IMR-90 (cell line): ENCODE measurements at regions of chr12 and their contacts with region 1.

Region 1: DNA sequence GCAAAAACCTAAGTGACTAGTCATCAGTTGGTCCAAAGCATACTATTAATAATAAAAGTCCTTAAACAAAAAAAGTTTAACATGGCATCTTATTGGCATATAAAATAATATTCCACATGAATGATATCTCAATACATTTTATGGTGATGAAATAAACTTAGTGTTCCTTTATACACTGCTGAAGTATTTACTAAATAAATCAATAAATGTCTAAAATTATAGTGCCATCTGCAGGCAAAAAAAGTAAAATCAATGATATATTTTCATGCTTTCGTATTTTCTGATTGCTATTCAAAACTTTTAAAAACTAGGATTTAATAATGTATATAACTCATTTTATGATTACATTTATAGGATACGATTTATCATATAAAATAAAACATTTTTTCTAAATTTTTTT is 30.5 kb downstream of the PUS7L start:
- DNase-seq: no peak
- ATAC-seq: no peak
- H3K4me3 ChIP-seq: no peak overlapping the region
- H3K27ac ChIP-seq: no peak overlapping the region
- H3K4me1 ChIP-seq: no peaks in the 10 kb centered on the region
- H3K27me3 ChIP-seq: no peaks in the 10 kb centered on the region
- CTCF ChIP-seq: peak; percentile 37; the same call in 1 of the 2 replicates
- POLR2A ChIP-seq: no peak
- RAD21 ChIP-seq: no peak

Region 2: DNA sequence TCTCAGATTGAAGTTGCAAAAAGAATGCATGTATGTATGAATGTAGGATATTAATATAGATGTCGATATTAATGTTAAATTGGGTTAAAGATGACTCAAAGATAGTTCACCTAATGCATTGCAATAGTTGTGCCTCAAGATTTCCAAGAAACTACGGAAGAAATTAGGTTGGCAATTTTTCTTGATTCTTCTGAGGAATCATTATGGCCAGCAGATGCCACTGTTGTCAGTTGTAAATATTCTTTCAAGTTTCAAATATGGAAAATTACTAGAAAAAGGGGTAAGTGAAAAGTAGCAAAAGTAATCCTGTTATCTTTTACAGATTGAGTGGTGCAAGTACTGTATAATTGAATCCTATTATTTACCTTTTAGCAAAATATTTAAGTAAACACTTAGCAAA is 378.3 kb before region 1 on chr12:
- CTCF ChIA-PET with region 1: no interaction called
- POLR2A ChIA-PET with region 1: no interaction called
- dilution Hi-C with region 1: no loop called
- in situ Hi-C with region 1: no loop called
- intact Hi-C with region 1: loop called (anchors 2 kb)
- DNase-seq: peak; percentile 31
- ATAC-seq: peak; percentile 27; the same call in 1 of the 2 replicates
- H3K4me3 ChIP-seq: no peak overlapping the region
- H3K27ac ChIP-seq: no peak overlapping the region
- H3K4me1 ChIP-seq: no peaks in the 10 kb centered on the region
- H3K27me3 ChIP-seq: no peaks in the 10 kb centered on the region
- CTCF ChIP-seq: peak; percentile 49
- POLR2A ChIP-seq: no peak
- RAD21 ChIP-seq: peak; percentile 39; the same call in 1 of the 2 replicates

Region 3: DNA sequence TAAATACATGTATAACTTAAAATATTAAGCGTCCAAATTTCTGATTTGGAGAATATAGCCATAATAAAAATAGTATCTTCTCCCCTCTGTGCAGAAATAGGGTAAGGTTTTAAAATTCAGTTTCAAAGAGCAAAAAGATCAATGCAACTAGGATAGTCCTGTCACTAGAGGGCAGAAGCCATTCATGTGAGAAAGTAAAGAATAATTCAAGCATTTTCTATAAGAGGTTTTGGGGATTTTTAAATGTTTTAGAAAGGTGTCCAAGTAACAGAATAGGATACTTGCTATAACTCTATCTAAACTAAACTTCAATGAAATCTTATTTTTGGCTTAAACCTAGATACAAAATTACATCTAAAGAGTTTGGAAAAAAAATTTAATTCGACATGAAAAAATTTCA is 226.4 kb before region 1 on chr12:
- CTCF ChIA-PET with region 1: interaction called, 3 read pairs
- POLR2A ChIA-PET with region 1: no interaction called
- dilution Hi-C with region 1: no loop called
- in situ Hi-C with region 1: no loop called
- intact Hi-C with region 1: loop called (anchors 1 kb)
- DNase-seq: peak; percentile 34
- ATAC-seq: peak; percentile 51; the same call in 1 of the 2 replicates
- H3K4me3 ChIP-seq: no peak overlapping the region
- H3K27ac ChIP-seq: no peak overlapping the region
- H3K4me1 ChIP-seq: no peaks in the 10 kb centered on the region
- H3K27me3 ChIP-seq: no peaks in the 10 kb centered on the region
- CTCF ChIP-seq: peak; percentile 60
- POLR2A ChIP-seq: no peak
- RAD21 ChIP-seq: peak; percentile 65